MCF 10A (cell line): ENCODE measurements at regions of chr2 and their contacts with region 1.

Region 1: GRCh38 chr2:100291120-100291970 is 31.0 kb downstream of the LONRF2 start:
- DNase-seq: peak; percentile 89
- H3K4me3 Mint-ChIP-seq: no peak overlapping the region
- H3K27ac Mint-ChIP-seq: no peak overlapping the region
- H3K4me1 Mint-ChIP-seq: no peaks in the 10 kb centered on the region
- H3K27me3 Mint-ChIP-seq: no peaks in the 10 kb centered on the region
- CTCF ChIP-seq: no peak

Region 2: GRCh38 chr2:100104718-100105677 is 186.3 kb before region 1 on chr2:
- CTCF ChIA-PET with region 1: no interaction called
- POLR2A ChIA-PET with region 1: no interaction called
- intact Hi-C with region 1: no loop called
- DNase-seq: no peak
- H3K4me3 Mint-ChIP-seq: peak overlapping the region; percentile 33
- H3K27ac Mint-ChIP-seq: no peak overlapping the region
- H3K4me1 Mint-ChIP-seq: no peaks in the 10 kb centered on the region
- H3K27me3 Mint-ChIP-seq: peaks cover 23% of the 10 kb centered on the region
- CTCF ChIP-seq: no peak

Region 3: GRCh38 chr2:100301881-100302584 is 10.7 kb after region 1 on chr2:
- CTCF ChIA-PET with region 1: interaction called, 10 read pairs
- POLR2A ChIA-PET with region 1: no interaction called
- intact Hi-C with region 1: no loop called
- DNase-seq: no peak
- H3K4me3 Mint-ChIP-seq: no peak overlapping the region
- H3K27ac Mint-ChIP-seq: no peak overlapping the region
- H3K4me1 Mint-ChIP-seq: no peaks in the 10 kb centered on the region
- H3K27me3 Mint-ChIP-seq: no peaks in the 10 kb centered on the region
- CTCF ChIP-seq: no peak

Region 4: DNA sequence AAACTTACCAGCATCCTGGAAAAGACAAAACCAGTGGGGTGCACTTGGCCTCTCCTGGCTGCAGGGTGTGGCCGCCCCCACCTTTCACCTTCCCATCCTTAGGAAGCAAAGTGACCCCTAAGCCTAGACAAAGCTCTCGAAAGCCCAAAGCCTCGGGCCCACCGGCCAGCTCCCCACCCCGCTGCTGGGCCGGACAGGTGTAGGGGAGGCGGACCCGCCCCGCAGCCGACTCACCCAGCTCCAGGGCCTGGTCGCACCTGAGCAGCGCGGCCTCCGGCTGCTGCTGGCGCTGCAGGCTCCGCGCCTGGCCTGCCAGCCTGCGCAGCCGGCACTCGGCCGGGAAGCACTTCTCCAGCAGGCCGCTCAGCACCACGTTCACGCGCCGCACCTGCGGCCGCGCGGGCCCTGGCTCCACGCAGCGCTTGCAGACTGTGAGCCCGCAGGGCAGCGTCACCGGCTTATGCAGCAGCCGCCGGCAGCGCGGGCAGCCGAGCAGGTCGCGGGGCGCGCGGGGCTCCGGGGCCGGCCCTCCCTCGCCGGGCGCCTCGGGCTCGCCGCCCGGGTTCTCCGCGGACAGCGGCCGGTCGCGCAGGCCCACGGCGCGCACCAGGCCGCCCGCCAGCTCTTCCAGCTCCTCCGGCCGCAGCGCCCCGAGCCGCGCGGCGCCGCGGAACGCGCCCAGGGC is 30.0 kb after region 1 on chr2:
- CTCF ChIA-PET with region 1: no interaction called
- POLR2A ChIA-PET with region 1: no interaction called
- intact Hi-C with region 1: no loop called
- DNase-seq: no peak
- H3K4me3 Mint-ChIP-seq: no peak overlapping the region
- H3K27ac Mint-ChIP-seq: no peak overlapping the region
- H3K4me1 Mint-ChIP-seq: no peaks in the 10 kb centered on the region
- H3K27me3 Mint-ChIP-seq: no peaks in the 10 kb centered on the region
- CTCF ChIP-seq: no peak

Region 5: GRCh38 chr2:100350707-100351106 is 59.4 kb after region 1 on chr2:
- CTCF ChIA-PET with region 1: no interaction called
- POLR2A ChIA-PET with region 1: no interaction called
- intact Hi-C with region 1: no loop called
- DNase-seq: no peak
- H3K4me3 Mint-ChIP-seq: no peak overlapping the region
- H3K27ac Mint-ChIP-seq: no peak overlapping the region
- H3K4me1 Mint-ChIP-seq: peaks cover 5% of the 10 kb centered on the region
- H3K27me3 Mint-ChIP-seq: no peaks in the 10 kb centered on the region
- CTCF ChIP-seq: no peak

Region 6: GRCh38 chr2:100365434-100365833 is 74.1 kb after region 1 on chr2:
- CTCF ChIA-PET with region 1: interaction called, 4 read pairs
- POLR2A ChIA-PET with region 1: interaction called, 22 read pairs
- intact Hi-C with region 1: loop called (anchors 1 kb)
- DNase-seq: peak; percentile 100
- H3K4me3 Mint-ChIP-seq: no peak overlapping the region
- H3K27ac Mint-ChIP-seq: peak overlapping the region; percentile 39
- H3K4me1 Mint-ChIP-seq: peaks cover 15% of the 10 kb centered on the region
- H3K27me3 Mint-ChIP-seq: no peaks in the 10 kb centered on the region
- CTCF ChIP-seq: no peak